ENCODE measurements at regions of chr6 and their contacts with region 1.

Region 1: DNA sequence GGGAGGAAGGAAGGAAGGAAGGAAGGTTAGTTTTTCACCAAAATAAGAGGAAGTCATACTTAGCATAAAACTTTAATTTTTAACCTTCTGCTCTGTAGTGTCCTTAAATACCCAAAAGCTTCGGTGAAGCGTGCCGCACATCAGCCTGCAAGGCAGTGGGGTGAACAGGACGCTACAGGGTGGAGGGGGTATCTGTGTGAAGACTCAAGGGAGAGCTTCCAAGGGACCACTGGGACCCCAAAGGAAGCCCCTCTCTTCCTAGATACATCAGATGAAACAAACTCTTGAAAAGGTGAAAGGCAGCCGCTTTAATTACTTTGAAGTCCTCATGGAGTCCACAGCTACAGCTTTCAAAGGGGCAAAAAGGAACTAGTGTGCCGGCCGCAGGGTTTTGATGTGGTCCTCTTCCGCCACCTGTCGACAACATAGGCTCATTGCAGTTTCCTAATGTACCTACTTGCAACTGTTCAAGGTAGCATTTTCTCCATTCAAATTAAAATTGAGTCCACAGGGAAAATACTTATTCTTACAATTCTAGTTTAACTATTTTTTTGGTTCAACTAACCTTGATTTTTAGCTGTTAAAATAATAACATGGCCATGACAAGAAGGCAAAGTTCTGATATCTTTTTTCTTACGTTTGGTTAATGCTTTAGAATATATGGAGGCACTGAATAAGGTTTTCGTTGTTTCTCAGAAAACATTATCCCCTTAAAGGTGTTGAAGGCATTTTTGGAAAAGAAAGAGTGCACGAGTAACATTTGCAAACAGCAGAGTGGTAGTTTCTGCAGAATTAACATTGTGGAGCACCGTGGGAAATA is 135.0 kb upstream of the RIPOR2 start:
- H3K4me3 Mint-ChIP-seq: no peak overlapping the region
- H3K27ac Mint-ChIP-seq: no peak overlapping the region
- H3K4me1 Mint-ChIP-seq: peaks cover 1% of the 10 kb centered on the region
- H3K27me3 Mint-ChIP-seq: peaks cover 1% of the 10 kb centered on the region

Region 2: DNA sequence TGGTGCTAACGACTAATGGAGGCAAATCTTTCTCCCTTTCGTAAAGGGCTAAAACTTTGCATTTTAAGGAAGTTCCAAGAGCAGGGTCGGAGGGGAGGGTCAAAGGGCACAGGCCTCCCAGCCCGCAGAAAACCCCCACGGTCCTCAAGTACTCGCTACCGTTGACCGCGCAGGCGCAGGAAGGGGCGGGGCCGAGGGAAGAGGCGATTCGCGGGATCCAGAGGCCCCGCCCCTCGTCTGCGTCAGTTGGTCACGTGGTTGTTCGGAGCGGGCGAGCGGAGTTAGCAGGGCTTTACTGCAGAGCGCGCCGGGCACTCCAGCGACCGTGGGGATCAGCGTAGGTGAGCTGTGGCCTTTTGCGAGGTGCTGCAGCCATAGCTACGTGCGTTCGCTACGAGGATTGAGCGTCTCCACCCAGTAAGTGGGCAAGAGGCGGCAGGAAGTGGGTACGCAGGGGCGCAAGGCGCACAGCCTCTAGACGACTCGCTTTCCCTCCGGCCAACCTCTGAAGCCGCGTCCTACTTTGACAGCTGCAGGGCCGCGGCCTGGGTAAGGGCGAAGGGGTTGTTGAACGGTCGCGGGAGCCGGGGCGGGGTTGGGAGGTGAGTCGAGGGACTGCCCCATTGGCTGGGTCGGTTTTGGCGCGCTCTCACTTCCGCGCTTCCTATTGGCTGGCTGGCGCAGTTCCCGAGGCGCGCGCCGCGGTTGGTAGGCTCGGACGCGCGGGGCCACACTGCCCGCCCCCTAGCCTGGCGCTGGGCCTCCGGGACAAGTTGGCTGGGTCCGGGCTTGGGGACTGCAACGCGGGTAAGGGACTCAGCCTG is 295.8 kb before region 1 on chr6 and contains the start of gene GMNN:
- intact Hi-C with region 1: loop called (anchors 10 kb)
- H3K4me3 Mint-ChIP-seq: peak within 1 kb of the TSS; percentile 99
- H3K27ac Mint-ChIP-seq: peak within 1 kb of the TSS; percentile 95
- H3K4me1 Mint-ChIP-seq: peaks cover 26% of the 10 kb centered on the region
- H3K27me3 Mint-ChIP-seq: no peaks in the 10 kb centered on the region

Region 3: DNA sequence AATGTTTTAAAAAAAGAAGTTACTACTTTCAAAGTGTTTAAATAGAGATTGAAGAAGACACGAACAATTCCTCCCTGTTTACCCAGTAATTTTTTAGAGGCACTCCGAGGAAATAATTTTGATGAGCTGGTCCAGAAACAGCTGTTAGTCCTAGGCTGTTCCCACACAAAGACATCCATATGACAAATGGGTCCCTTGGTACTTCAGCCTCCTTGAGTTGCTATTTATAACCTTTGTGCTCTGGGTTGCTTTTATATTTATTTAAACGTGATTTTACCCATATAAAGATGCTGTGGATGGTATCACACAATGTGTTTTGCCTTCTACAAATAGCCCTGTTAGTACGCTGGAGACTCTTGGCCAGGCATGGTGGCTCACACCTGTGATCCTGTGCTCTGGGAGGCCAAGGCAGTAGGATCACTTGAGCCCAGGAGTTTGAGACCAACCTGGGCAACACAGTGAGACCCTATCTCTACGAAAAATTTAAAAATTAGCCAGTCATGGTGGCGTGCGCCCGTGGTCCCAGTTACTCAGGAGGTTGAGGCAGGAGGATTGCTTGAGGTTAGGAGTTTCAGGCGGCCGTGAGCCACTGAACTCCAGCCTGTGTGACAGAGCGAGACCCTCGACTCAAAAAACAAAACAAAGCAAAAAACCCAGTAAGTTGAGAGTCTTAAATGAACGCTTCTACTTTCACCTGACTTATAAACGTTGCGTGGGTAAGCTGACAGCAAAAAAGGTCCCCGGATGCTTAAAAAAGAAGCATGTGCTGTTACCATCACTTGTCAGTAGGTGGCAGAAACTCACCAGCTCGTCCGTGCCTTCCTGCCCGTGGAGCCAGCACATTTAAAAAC is 215.1 kb before region 1 on chr6:
- intact Hi-C with region 1: loop called (anchors 1 kb)
- H3K4me3 Mint-ChIP-seq: no peak overlapping the region
- H3K27ac Mint-ChIP-seq: no peak overlapping the region
- H3K4me1 Mint-ChIP-seq: peaks cover 32% of the 10 kb centered on the region
- H3K27me3 Mint-ChIP-seq: no peaks in the 10 kb centered on the region

Region 4: GRCh38 chr6:25017932-25018567 is 52.7 kb before region 1 on chr6:
- intact Hi-C with region 1: loop called (anchors 1 kb)
- H3K4me3 Mint-ChIP-seq: no peak overlapping the region
- H3K27ac Mint-ChIP-seq: no peak overlapping the region
- H3K4me1 Mint-ChIP-seq: peaks cover 34% of the 10 kb centered on the region
- H3K27me3 Mint-ChIP-seq: peaks cover 2% of the 10 kb centered on the region

Region 5: DNA sequence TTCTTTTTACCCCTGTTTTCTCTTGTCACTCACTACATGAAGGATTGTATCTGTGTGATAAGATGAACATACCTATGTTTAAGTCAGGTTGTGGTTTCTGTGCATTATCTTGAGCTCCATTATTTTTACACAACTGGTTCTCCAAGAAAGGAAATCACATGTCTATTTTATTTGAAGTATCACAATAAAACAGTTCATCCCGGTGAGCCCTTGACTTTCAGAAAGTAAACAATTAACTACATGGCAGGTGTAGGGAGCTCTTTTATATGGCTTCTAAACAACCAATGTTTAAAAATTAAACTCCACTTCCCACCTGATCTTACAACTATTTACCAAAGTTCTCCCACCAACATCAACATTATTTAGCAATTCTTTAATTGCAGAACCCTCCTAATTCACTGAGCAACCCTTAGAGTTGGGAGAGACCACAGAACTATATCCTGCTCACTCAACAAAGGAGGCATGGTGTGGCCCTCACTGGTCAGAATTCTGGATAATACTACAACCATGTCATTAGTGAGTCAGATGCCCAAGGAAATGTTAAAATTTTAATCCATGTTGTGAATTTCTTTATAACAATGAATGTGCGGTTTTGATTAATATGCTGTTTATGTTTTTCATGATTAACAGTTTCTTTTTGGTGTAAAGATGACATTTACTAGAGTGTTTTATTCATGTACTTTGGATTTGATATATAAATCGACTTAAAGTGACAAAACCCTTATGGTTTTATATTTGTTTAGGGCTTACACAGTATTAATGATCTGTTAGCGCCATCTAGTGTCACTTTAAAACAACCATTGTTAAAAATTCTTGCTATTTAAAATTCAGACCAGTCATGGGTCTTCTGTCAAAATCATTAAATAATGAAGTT is 531.3 kb after region 1 on chr6:
- intact Hi-C with region 1: loop called (anchors 10 kb)
- H3K4me3 Mint-ChIP-seq: no peak overlapping the region
- H3K27ac Mint-ChIP-seq: no peak overlapping the region
- H3K4me1 Mint-ChIP-seq: no peaks in the 10 kb centered on the region
- H3K27me3 Mint-ChIP-seq: no peaks in the 10 kb centered on the region

Measured in dendritic cell treated with granulocyte-macrophage colony-stimulating factor and Interleukin-4, amounts not matched to agents 40 ng/mL and 50 ng/mL, for 4 days (primary cell).